Ovary (tissue), 10 donors: ENCODE measurements at regions of chr19 and their contacts with region 1.

Region 1: DNA sequence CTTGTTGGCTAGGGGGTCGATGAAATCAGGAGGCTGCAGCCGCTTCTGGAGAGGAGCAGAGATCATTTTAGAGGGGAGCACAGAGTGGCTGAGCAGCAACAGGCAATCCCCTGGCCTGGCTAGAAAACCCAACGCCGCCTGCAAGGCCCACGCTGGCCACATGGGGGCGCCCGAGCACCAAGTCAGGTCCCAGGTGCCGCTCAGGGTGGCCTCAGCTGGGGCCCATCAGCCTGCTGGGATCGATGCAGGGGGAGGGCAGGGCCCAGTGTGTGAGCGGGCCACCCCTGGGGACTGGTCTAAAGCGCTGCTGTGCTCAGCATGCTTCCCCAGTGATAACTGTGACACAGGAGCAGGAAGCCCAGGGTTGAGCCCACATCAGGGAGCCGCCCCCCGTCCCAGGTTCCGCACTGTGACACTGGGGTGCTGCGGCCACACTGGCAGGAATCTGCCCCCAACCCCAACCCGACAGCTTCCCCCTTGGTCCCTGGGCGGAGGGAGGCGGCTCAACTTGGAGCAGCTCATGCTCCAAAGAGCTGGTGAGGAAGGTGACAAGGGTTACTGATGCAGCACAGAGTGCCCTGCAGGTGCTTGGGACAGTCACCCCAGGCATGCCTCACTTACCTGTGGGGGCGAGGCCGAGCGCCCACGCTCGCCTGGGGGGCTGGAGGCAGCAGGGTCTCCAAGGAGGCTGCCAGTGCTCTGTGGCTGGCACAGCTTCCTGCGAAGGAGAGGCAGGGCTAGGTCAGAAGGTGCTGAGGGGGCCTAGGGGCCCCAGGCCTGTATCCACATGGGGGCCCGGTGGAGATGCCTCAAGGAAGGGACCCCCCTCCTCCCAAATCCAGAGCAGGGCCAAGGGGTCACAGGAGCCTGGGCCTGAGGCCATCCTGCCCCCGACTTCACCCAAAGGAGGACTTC is 13.3 kb upstream of the ISYNA1 start:
- DNase-seq: peak; percentile 84 to 94 (median 92)
- H3K4me3 ChIP-seq: no peak overlapping the region
- H3K27ac ChIP-seq: no peak overlapping the region
- H3K4me1 ChIP-seq: peaks cover 2% of the 10 kb centered on the region
- H3K27me3 ChIP-seq: no peaks in the 10 kb centered on the region
- CTCF ChIP-seq: peak; percentile 95 to 98 (median 98)
- EP300 ChIP-seq: no peak
- POLR2A ChIP-seq: no peak

Region 2: DNA sequence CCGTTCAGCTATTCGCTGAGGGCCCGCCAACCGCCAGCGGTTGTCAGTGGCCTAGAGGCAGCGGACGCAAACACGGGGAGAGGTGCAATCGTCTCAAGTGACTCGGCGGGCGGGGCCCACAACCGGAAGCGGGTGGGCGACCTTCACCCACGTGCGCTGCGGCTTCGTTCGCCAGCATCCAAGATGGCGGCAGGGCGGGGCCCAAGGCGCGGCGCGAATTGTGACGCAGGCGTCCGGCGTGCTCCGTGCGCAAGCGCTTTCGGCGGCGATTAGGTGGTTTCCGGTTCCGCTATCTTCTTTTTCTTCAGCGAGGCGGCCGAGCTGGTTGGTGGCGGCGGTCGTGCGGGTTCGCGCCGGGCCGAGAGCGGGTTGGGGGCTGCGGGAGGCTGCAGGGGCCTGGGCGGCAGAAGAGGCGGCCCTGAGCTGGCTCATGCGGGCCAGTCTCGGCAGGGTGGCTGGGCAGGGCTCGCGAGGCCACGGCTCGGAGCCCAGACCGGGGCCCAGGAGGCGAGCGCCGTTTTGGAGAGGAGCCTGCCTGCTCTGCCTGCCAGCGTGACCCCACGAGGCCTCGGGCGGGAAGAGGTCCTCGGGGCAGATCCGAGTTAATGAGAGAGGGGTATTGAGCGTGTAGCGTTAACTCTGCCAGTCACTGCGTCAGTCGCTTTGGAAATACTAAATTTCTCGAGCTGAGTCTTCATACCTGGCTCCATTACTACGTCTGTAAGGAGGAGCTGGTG is 120.5 kb after region 1 on chr19 and contains the start of gene UBA52:
- intact Hi-C with region 1: loop called in 1 of 4 experiments (anchors 10 kb)
- DNase-seq: peak; percentile 97 to 99 (median 98)
- H3K4me3 ChIP-seq: peak within 1 kb of the TSS; percentile 99
- H3K27ac ChIP-seq: peak within 1 kb of the TSS; percentile 72 to 81
- H3K4me1 ChIP-seq: peaks cover 7% of the 10 kb centered on the region
- H3K27me3 ChIP-seq: no peaks in the 10 kb centered on the region
- CTCF ChIP-seq: no peak
- EP300 ChIP-seq: no peak
- POLR2A ChIP-seq: peak; percentile 96
- total RNA-seq, gene UBA52: 1,269 to 1,882 (median 1,382) TPM

Region 3: DNA sequence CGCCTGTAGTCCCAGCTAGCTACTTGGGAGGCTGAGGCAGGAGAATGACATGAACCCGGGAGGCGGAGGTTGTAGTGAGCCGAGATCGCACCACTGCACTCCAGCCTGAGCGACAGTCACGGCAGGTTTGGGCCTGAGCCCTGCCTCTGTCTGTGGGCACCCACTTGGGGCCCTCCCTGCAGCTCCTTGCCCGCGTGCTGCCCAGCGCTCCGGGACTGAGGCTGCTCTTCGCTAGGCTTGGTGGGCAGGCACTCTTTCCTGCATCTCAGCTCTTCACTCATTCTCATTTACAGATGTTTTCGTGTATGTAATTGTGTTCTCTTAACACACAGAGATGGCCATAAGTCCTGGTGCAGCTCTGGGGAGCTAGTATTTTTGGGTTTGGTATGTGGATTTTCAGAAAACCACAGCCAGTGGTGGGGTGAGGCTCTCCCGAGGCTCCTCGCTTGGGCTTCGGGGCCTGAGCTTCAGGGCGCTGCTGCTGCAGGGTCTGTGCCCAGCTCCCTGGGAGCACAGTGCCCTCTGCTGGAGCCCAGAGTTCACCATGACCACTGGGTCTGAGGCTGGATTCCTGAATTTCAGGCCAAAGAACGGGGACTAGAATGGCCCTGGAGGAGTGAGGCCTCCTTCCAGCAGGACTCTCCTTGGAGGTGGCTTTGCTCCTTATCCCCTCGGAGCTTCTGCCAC is 395.8 kb after region 1 on chr19:
- intact Hi-C with region 1: loop called in 1 of 4 experiments (anchors 5 kb)
- DNase-seq: peak; percentile 78 to 88 (median 84)
- H3K4me3 ChIP-seq: no peak overlapping the region
- H3K27ac ChIP-seq: peak overlapping the region in 1 of 2 donors; percentile 13
- H3K4me1 ChIP-seq: peaks cover 48% of the 10 kb centered on the region
- H3K27me3 ChIP-seq: no peaks in the 10 kb centered on the region
- CTCF ChIP-seq: peak; percentile 76 to 81 (median 80)
- EP300 ChIP-seq: no peak
- POLR2A ChIP-seq: no peak

Region 4: DNA sequence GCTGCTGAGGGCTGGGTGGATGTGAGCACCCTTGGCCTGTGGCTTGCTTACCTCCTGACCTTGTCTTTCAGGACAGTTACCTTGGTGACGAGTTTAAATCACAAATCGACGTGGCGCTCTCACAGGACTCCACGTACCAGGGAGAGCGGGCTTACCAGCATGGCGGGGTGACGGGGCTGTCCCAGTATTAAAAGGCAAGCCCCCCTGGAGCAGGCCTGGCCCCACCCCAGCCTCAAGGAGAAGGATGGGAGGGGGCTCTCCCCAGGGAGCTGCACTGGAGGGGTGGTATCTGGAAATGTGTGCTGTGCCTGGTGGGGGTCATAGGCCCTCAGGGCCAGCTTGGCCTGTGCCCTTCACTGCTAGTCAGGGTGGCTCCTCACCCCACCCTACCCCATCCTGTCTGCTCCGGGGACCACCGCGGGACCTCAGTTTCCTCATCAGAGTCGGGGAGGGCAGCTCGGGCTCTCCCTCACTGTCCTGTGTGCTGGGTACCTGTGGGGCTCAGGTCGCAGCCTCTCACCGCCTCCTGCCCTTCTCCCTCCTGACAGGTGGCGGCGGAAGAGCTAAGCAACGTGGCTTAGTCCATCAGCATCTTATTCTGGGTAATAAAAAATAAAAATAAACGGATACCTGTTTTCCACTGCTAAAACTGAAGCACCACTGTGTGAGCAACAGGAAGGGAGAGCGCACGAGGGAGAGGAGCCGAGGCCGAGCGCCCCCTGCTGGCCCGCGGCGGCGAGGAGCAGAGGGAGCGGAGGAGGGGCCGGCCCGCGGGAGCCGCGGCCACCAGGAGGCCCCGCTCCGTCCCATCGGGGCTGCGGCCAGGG is 415.0 kb after region 1 on chr19:
- intact Hi-C with region 1: loop called in 1 of 4 experiments (anchors 10 kb)
- DNase-seq: peak; percentile 50 to 79 (median 71)
- H3K4me3 ChIP-seq: no peak overlapping the region
- H3K27ac ChIP-seq: no peak overlapping the region
- H3K4me1 ChIP-seq: peaks cover 3% of the 10 kb centered on the region
- H3K27me3 ChIP-seq: no peaks in the 10 kb centered on the region
- CTCF ChIP-seq: peak; percentile 92 to 96 (median 95)
- EP300 ChIP-seq: no peak
- POLR2A ChIP-seq: no peak